SK-N-SH (cell line): ENCODE measurements at regions of chr14 and their contacts with region 1.

Region 1: GRCh38 chr14:99415496-99416281 is 65.0 kb downstream of the SETD3 start:
- DNase-seq: peak; percentile 77
- H3K4me3 ChIP-seq: no peak overlapping the region; a peak in 1 of 4 replicates
- H3K27ac ChIP-seq: no peak overlapping the region
- H3K4me1 ChIP-seq: no peaks in the 10 kb centered on the region; a peak in 2 of 4 replicates
- H3K27me3 ChIP-seq: no peaks in the 10 kb centered on the region
- CTCF ChIP-seq: peak; percentile 91
- EP300 ChIP-seq: no peak
- RAD21 ChIP-seq: peak; percentile 87

Region 2: DNA sequence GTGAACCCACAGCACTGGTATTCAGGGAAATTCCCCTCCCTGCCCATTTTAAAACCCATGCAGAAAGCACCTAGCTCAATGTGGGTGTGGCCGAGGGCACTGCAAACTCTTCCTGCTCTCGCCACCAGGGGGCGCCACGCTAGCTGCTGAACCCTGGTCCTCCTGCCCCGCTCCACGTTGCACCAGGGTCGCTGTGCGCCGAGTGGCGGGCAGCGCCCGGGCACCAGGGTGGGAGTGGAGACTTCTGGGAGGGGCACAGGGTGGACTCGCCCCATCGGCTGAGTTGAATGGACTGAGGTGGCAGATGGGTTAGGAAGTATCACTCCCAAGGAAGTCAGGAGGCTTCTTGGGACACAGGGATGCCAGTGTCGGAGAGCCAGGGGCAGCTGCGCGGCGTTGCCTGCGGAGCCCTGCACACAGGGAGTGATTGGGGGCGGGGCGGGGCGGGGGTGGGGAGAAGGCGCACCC is 95.5 kb before region 1 on chr14:
- CTCF ChIA-PET with region 1: interaction called, 37 read pairs
- POLR2A ChIA-PET with region 1: no interaction called
- DNase-seq: peak; percentile 84
- H3K4me3 ChIP-seq: peak overlapping the region in 1 of 2 experiments; percentile 39; a peak in 1 of 4 replicates
- H3K27ac ChIP-seq: no peak overlapping the region
- H3K4me1 ChIP-seq: no peaks in the 10 kb centered on the region; a peak in 1 of 4 replicates
- H3K27me3 ChIP-seq: peaks cover 28% of the 10 kb centered on the region
- CTCF ChIP-seq: peak; percentile 78
- EP300 ChIP-seq: no peak
- RAD21 ChIP-seq: peak; percentile 48

Region 3: GRCh38 chr14:99393047-99393655 is 22.5 kb before region 1 on chr14:
- CTCF ChIA-PET with region 1: interaction called, 64 read pairs
- POLR2A ChIA-PET with region 1: no interaction called
- DNase-seq: peak; percentile 64
- H3K4me3 ChIP-seq: no peak overlapping the region
- H3K27ac ChIP-seq: no peak overlapping the region
- H3K4me1 ChIP-seq: no peaks in the 10 kb centered on the region
- H3K27me3 ChIP-seq: no peaks in the 10 kb centered on the region
- CTCF ChIP-seq: peak; percentile 68
- EP300 ChIP-seq: no peak
- RAD21 ChIP-seq: peak; percentile 26; the same call in 1 of the 2 replicates

Region 4: GRCh38 chr14:99427632-99428300 is 12.1 kb after region 1 on chr14:
- CTCF ChIA-PET with region 1: interaction called, 29 read pairs
- POLR2A ChIA-PET with region 1: no interaction called
- DNase-seq: no peak
- H3K4me3 ChIP-seq: no peak overlapping the region
- H3K27ac ChIP-seq: peak overlapping the region in 1 of 2 experiments; percentile 46
- H3K4me1 ChIP-seq: no peaks in the 10 kb centered on the region; a peak in 1 of 4 replicates
- H3K27me3 ChIP-seq: no peaks in the 10 kb centered on the region
- CTCF ChIP-seq: no peak
- EP300 ChIP-seq: no peak
- RAD21 ChIP-seq: no peak

Region 5: GRCh38 chr14:99450266-99450665 is 34.6 kb after region 1 on chr14:
- CTCF ChIA-PET with region 1: interaction called, 10 read pairs
- POLR2A ChIA-PET with region 1: no interaction called
- DNase-seq: no peak
- H3K4me3 ChIP-seq: no peak overlapping the region
- H3K27ac ChIP-seq: no peak overlapping the region
- H3K4me1 ChIP-seq: no peaks in the 10 kb centered on the region
- H3K27me3 ChIP-seq: no peaks in the 10 kb centered on the region
- CTCF ChIP-seq: no peak
- EP300 ChIP-seq: no peak
- RAD21 ChIP-seq: no peak

Region 6: GRCh38 chr14:99676673-99677072 is 261.0 kb after region 1 on chr14:
- CTCF ChIA-PET with region 1: no interaction called
- POLR2A ChIA-PET with region 1: no interaction called
- DNase-seq: no peak
- H3K4me3 ChIP-seq: no peak overlapping the region
- H3K27ac ChIP-seq: no peak overlapping the region
- H3K4me1 ChIP-seq: peaks cover 0 to 3% of the 10 kb centered on the region in 2 experiments; a peak in 1 of 4 replicates
- H3K27me3 ChIP-seq: 0 out of 2 replicates have a peak, but pooled peaks cover 7% of the 10 kb centered on the region
- CTCF ChIP-seq: no peak
- EP300 ChIP-seq: no peak
- RAD21 ChIP-seq: no peak